Activated CD8-positive, alpha-beta memory T cell treated with anti-CD3 and anti-CD28 coated beads, Interleukin-2, amount 10 ng/mL, durations not matched to agents 7 days and 5 days (primary cell): ENCODE measurements at regions of chr21 and their contacts with region 1.

Region 1: DNA sequence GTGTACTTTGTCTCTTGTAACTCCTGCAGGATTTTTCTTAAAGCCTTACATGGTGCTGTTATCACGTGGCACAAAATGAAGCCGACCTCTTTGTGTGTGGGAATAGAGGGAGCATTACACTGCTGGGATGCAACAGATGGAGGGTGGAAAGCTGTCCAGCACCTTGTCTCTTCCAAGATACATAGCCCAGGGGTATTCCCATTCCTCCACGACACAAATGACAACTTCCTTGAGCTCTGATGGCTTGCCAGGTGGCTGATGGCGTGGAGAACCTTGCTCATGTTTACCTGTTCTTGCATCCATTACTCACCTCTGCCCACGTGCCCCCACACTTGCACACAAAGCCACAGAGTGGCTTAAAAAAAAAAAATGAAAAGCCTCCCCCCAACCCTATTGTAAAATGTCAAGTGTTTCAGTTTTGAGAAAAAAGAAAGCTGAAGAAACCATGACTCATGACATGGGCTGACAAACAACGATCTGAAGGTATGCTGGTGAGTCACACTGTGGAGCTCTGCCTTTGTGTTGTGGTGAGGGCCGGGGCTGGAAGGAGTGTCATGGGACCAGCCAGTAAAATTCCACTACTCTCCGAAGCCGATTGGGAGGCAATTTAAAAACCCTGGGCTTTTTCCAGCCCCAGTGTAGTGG is 32.0 kb upstream of the ATP5PO start:
- DNase-seq: peak; percentile 93
- ATAC-seq: peak; percentile 68
- H3K4me3 Mint-ChIP-seq: peak overlapping the region; percentile 67
- H3K27ac Mint-ChIP-seq: peak overlapping the region; percentile 98
- H3K4me1 Mint-ChIP-seq: peaks cover 77% of the 10 kb centered on the region
- H3K27me3 Mint-ChIP-seq: no peaks in the 10 kb centered on the region

Region 2: DNA sequence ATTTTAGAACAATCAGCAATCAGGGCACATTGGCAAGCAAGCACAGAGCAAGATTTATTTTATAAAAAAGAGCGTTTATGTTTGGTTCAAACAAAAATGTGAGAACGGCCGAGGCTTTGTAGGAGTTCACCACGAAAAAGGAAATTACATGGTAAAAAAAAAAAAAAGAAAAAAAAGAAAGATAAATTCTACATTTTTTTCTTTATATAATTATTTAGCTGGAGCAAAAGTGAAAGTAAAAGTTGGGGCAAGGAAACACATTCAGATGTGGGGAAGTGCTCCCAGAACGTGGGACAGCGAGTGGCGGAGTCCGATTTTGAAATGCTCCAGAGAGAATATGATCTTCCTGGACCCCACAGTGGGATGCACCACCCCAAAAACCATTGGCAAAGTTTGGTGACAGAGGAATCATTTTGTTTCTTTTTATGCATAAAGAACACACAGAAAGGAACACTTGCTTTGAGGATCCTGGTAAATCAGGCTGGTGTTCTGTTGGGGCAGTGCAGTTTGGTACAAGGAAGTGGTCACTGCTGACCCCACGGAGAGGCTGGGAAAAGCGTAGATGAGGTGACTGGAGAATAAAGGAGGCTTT is 15.7 kb before region 1 on chr21:
- CTCF ChIA-PET with region 1: interaction called, 122 read pairs
- DNase-seq: no peak
- ATAC-seq: peak; percentile 16
- H3K4me3 Mint-ChIP-seq: peak overlapping the region; percentile 91
- H3K27ac Mint-ChIP-seq: peak overlapping the region; percentile 98
- H3K4me1 Mint-ChIP-seq: peaks cover 28% of the 10 kb centered on the region
- H3K27me3 Mint-ChIP-seq: no peaks in the 10 kb centered on the region

Region 3: DNA sequence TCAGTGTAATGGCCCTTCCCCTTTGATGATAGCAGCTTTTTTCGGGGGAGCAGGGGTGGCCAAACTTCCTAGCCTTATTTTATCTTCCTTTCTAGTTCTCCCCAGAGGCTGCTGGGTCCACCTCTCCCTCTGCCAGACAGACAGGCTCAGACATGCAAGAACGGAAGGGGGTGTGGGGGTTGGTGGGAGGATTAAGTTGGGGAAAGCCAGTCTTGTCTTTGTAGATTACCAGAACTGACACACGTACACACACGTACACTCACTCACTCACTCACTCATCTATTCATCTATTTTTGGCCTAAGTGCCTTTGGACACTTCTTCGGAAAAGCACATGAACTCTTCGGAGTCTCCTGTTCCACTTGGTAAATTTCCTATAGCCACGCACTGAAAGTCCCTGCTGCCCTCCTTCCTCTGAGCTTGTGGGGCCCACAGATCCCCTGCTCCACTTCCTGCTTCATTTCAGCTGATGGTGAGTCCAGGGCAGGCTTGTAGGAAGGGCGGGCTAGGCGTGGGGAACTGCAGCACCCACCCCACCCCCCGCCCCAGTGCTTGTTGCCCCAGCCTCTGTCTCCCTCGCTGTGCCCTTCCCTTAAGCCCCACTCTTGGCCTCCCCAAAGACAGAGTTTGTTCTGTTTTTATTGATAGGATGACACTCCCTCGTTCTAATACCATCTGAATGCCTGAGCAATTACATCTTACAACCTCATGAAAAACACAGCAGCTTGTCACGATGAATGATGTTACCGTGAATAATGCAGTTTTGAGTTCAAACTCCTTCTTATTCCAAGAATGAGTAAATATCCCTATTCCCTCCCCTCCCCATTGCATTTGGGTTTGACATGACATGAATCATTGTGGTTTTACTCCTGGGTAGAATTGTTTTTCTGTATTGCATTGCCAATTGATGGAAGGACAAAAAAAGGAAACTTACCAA is 28.8 kb after region 1 on chr21:
- CTCF ChIA-PET with region 1: interaction called, 19 read pairs
- DNase-seq: peak; percentile 72
- ATAC-seq: peak; percentile 49
- H3K4me3 Mint-ChIP-seq: peak overlapping the region; percentile 69
- H3K27ac Mint-ChIP-seq: peak overlapping the region; percentile 97
- H3K4me1 Mint-ChIP-seq: peaks cover 86% of the 10 kb centered on the region
- H3K27me3 Mint-ChIP-seq: no peaks in the 10 kb centered on the region